ENCODE measurements at regions of chr20 and their contacts with region 1.

Region 1: DNA sequence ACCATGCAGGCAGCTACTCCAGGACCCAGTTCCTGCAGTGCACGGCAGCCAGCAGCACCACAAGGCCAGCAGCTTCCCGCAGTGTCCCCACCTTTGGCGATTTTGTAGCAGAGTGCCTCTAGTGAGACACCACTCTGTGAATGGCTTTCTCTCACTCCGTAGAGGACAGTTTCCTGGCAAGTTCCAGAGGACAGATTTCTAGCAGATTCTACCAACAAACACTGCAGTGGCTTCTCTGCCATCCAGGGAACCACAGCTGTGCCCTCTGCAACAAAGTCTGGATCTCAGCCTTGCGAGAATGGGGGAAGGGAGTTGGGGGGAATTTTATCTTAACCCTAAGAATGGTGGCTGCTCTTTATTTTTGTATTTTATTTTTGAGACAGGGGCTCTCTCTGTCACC is 28.7 kb downstream of the SNHG17 start:
- DNase-seq: no peak

Region 2: GRCh38 chr20:38343311-38344106 is 63.0 kb before region 1 on chr20:
- intact Hi-C with region 1: loop called (anchors 5 kb)
- DNase-seq: no peak

Measured in cardiac septum (tissue), 1 donor.